ENCODE measurements at regions of chr10 and their contacts with region 1.

Region 1: GRCh38 chr10:43461950-43462349 is 25.0 kb downstream of the ZNF487 start:
- DNase-seq: no peak
- ATAC-seq: peak; percentile 53 to 87 (median 66)
- H3K4me3 ChIP-seq: peak overlapping the region; percentile 21
- H3K27ac ChIP-seq: no peak overlapping the region
- H3K4me1 ChIP-seq: no peaks in the 10 kb centered on the region
- H3K27me3 ChIP-seq: no peaks in the 10 kb centered on the region
- CTCF ChIP-seq: peak; percentile 84

Region 2: DNA sequence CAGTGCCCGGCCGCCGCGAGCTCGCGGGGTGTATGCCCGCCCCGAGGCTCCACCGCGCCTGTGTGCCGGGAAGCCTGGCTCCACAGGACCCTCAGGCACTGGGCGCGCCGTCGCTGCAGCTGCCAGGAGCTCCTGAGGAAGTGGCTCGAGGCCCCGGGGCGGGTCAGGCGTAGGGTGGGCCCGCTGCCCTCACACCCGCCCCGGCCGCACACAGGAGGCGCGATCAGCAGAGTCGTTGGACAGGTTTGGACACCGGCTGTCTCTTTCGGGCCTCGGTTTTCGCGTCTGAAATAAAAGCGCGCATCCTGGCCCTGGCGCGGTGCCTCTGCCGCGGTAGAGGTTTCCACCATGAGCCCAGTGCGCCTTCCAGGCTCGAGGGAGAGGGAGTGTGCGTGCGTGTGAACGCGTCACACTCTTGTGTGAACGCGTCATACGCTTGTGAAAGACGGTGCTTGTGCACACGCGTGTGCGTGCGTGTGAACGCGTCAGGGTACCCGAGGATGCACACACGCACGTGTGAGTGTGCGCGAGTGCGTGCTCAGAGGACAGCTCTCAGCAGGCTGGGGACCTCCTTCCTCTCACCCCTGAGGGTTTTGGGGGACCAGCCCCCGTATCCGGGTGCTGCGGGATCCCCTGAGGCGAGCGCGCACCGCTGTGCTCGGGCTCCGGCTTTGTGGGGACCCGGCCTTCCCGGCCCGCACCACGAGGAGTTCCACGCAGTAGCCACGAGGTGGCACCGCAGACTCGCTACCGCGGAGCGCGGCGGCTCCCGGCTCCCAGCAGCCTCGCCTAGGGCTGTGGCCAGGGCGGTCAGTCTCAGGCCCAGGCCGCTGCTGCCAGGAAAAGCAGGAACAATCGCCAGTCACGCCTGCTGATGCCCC is 595.6 kb before region 1 on chr10:
- intact Hi-C with region 1: loop called in 1 of 2 experiments (anchors 2 kb)
- DNase-seq: peak; percentile 81 to 92
- ATAC-seq: peak; percentile 100
- H3K4me3 ChIP-seq: peak overlapping the region; percentile 51
- H3K27ac ChIP-seq: no peak overlapping the region
- H3K4me1 ChIP-seq: no peaks in the 10 kb centered on the region
- H3K27me3 ChIP-seq: peaks cover 0 to 11% (median 3%) of the 10 kb centered on the region in 3 donors
- CTCF ChIP-seq: peak; percentile 82

Region 3: GRCh38 chr10:43292755-43293676 is 168.9 kb before region 1 on chr10:
- intact Hi-C with region 1: loop called (anchors 2 kb)
- DNase-seq: peak; percentile 39 to 63
- ATAC-seq: peak; percentile 79 to 93 (median 85)
- H3K4me3 ChIP-seq: peak overlapping the region; percentile 16
- H3K27ac ChIP-seq: no peak overlapping the region
- H3K4me1 ChIP-seq: no peaks in the 10 kb centered on the region
- H3K27me3 ChIP-seq: peaks cover 0 to 4% (median 0%) of the 10 kb centered on the region in 3 donors
- CTCF ChIP-seq: peak; percentile 73

Region 4: DNA sequence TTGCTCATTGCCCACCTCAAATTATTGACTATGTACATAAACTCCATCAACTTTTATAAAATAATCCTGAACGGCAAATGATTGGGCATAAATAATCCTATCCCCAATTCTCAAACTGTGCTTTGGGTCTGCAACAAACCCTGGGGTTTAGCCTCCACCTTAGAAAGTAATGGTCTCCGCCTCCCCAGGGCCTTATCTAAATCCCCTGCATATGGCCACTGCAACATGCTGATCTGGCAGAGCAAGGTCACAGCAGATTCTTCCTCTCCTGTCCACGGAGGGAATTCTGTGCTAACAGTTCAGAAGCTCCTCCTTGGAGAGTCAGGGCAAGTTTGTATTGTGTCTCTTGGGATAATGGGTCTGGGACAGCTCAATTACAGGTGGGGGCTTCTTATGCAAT is 72.1 kb before region 1 on chr10:
- intact Hi-C with region 1: loop called in 1 of 2 experiments (anchors 2 kb)
- DNase-seq: no peak
- ATAC-seq: no peak
- H3K4me3 ChIP-seq: no peak overlapping the region
- H3K27ac ChIP-seq: no peak overlapping the region
- H3K4me1 ChIP-seq: peaks cover under 1% of the 10 kb centered on the region
- H3K27me3 ChIP-seq: no peaks in the 10 kb centered on the region
- CTCF ChIP-seq: no peak

Region 5: DNA sequence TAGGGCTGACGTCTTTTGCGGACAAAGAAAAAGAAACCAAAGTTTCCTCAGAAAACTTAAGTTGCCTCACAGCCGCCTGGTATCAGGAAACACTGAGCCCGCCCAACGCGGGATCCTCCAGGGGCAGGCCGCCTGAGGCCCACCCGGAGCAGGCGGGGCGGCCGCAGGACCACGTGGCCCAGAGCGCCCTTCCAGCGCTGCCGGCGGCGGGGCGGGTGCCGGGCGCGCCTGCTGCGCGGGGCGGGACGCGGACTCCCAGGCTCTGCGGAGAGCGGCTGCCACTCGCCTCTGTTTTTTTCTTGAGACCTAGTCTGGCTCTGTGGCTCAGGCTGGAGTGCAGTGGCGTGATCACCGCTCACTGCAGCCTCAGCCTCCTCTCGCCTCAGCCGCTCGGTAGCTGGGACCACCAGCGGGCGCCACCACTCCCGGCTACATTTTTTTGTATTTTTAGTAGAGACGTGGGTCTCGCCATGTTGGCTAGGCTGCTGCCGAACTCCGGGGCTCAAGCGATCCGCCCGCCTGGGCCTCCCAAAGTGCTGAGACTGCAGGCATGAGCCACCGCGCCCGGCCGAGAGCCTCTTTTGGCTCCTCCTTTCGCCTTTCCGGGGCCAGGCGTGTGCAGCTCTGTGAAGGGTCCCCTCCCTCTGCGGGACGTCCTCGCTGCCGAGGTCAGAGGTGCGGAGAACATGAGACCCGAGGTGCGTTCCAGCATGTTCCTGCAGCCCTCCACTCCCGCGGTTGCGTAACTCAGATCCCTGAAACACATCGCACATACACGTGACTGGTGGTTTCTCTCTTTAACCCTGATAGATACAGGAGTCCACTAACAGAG is 41.4 kb before region 1 on chr10:
- intact Hi-C with region 1: no loop called
- DNase-seq: peak; percentile 92 to 94
- ATAC-seq: peak; percentile 95 to 97 (median 96)
- H3K4me3 ChIP-seq: peak overlapping the region; percentile 88
- H3K27ac ChIP-seq: peak overlapping the region; percentile 98
- H3K4me1 ChIP-seq: peaks cover 8% of the 10 kb centered on the region
- H3K27me3 ChIP-seq: no peaks in the 10 kb centered on the region
- CTCF ChIP-seq: no peak

Region 6: DNA sequence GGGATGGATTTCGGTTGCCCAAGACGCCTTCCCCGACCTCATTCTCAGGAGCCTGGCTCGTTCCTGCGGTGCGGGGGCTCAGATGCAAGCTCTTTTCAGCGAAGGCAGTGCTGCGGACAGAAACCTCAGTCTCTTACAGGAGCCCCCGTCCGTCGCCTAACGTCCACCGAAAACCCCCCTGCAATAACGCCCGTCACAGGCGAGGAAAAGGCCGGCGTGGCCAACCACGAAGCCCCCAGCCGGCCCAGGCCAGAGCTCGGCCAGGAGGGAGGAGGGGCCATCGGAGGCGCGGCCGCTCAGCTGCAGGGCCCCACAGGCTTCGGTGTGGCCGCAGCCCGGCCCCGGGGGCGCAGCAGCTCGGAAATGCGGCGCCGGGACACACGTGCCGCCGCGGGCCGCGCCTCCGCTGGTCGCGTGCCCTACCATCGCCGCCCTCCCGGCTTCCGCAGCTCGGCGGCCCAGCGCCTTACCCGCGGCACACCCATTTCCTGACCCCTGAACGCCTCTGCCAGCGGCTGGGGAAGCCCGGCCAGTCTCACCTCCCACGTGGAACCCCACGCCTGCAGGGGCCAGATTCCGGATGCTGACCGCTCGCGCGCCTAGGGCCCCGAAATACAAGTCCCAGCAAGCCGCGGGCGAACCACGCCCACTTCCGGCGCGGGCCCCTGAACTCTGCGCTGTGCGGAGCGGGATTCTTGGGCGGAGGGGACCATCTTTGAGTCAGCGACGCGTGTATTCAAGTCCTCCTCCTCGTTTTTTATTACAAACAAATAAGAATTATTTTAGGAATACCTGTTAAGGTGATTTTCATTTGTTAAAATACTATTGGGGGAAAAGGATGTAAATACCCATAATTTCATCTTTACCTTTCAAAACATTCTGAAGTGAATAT is 112.3 kb after region 1 on chr10 and contains the start of gene ZNF239:
- intact Hi-C with region 1: no loop called
- DNase-seq: peak; percentile 93 to 95
- ATAC-seq: peak; percentile 98 to 100 (median 100)
- H3K4me3 ChIP-seq: peak within 1 kb of the TSS; percentile 84
- H3K27ac ChIP-seq: peak within 1 kb of the TSS; percentile 82
- H3K4me1 ChIP-seq: no peaks in the 10 kb centered on the region
- H3K27me3 ChIP-seq: no peaks in the 10 kb centered on the region
- CTCF ChIP-seq: no peak
- total RNA-seq, gene ZNF239: 3.5 to 5.3 (median 4.2) TPM